Psoas muscle (tissue), 8 donors: ENCODE measurements at regions of chr1 and their contacts with region 1.

Region 1: GRCh38 chr1:147223740-147224615 is 1.2 kb downstream of the FMO5 start:
- DNase-seq: no peak
- ATAC-seq: no peak
- H3K4me3 ChIP-seq: no peak overlapping the region
- H3K27ac ChIP-seq: no peak overlapping the region
- H3K4me1 ChIP-seq: no peaks in the 10 kb centered on the region
- H3K27me3 ChIP-seq: no peaks in the 10 kb centered on the region
- CTCF ChIP-seq: no peak

Region 2: DNA sequence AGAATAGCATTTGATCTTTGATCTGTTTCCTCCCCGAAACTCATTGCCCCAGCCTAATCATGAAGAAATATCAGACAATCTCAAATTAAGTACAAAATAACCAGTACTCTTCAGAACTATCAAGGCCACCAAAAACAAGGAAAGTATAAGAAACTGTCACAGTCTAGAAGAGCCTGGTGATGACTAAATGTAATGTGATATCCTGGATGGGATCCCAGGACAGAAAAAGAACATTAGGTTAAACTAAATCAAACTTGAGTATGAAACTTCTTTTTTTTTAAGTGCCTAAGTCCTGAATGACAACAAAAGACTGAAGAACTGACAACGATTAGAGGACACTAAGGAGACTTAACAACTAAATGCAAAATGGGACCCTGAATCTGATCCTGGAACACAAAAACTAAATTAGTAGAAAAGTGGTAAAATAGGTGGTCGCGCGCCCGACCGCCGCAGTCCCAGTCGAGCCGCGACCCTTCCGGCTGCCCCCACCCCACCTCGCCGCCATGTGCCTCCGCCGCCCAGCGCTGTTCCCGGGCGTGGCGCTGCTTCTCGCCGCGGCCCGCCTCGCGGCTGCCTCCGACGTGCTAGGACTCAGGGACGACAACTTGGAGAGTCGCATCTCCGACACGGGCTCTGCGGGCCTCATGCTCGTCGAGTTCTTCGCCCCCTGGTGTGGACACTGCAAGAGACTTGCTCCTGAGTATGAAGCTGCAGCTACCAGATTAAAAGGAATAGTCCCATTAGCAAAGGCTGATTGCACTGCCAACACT is 46.2 kb before region 1 on chr1:
- intact Hi-C with region 1: loop called in 1 of 2 experiments (anchors 5 kb)
- DNase-seq: peak in 1 of 2 donors; percentile 45
- ATAC-seq: peak in 3 of 4 donors; percentile 27 to 58 (median 57)
- H3K4me3 ChIP-seq: peak overlapping the region; percentile 48
- H3K27ac ChIP-seq: no peak overlapping the region
- H3K4me1 ChIP-seq: peaks cover 17% of the 10 kb centered on the region
- H3K27me3 ChIP-seq: no peaks in the 10 kb centered on the region
- CTCF ChIP-seq: no peak